ENCODE measurements at regions of chr21 and their contacts with region 1.

Region 1: DNA sequence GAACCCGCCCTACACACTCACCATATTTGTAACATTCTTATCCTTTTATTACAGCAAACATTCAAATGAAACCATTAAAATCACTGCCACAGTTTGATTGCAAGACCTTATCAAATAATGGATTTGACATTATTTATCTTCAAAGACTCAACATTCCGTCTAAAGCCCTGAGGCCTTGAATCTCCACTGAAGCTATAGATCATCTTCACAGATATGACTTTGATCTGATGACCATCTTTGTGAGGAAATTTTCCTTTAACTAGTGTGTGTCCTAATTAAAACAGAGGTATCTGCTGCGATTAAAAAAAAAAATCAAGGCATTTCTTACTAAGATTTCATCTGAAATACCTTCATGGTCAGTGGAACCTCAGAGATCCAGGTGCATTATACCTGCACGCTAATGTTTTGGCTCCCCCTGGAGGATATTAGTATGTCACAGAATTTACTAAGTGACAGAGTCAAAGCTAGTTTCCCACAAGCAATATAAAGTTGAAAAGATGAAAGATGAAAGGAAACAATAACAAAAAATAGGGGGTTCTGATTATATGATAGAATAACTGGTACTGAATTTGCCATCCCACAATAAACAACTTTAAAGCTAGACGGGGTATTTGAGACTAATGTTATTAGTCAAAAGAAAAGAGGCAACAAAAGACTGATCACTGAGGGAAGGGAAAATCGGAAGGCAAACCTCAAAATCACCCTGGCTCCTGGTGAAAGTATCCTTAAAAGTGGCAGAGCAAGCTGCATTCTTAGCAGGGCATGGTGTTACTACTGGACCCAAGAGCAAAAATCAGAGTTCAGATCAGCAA is 923.4 kb downstream of the NCAM2 start:
- DNase-seq: peak in 1 of 2 experiments; percentile 43
- H3K4me3 ChIP-seq: no peak overlapping the region
- H3K4me3 Mint-ChIP-seq: no peak overlapping the region
- H3K27ac Mint-ChIP-seq: no peak overlapping the region
- H3K4me1 ChIP-seq: no peaks in the 10 kb centered on the region
- H3K4me1 Mint-ChIP-seq: peaks cover 7% of the 10 kb centered on the region
- H3K27me3 ChIP-seq: no peaks in the 10 kb centered on the region
- H3K27me3 Mint-ChIP-seq: peaks cover 2% of the 10 kb centered on the region
- CTCF ChIP-seq: peak; percentile 58 to 62

Region 2: DNA sequence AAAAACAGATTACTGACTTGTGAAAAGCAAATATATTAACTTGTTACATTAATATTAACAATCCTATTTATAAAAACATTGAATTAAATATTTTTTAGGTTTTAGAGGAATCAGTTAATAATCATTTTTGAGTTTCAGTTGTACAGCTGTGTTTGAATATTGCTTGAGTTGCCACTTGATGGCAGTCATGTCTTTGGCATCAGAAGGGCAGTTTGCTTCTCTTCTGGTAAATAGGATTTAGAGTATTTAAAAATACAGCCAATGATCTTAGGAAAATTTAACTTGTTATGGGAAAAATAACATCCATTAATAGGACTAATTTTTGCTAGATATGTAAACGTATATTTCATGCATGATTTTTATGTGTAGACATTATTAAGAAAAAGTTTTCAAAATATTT is 689.3 kb before region 1 on chr21:
- CTCF ChIA-PET with region 1: no interaction called
- POLR2A ChIA-PET with region 1: no interaction called
- intact Hi-C with region 1: loop called (anchors 1 kb)
- DNase-seq: peak in 1 of 2 experiments; percentile 3
- H3K4me3 ChIP-seq: no peak overlapping the region
- H3K4me3 Mint-ChIP-seq: no peak overlapping the region
- H3K27ac Mint-ChIP-seq: no peak overlapping the region
- H3K4me1 ChIP-seq: no peaks in the 10 kb centered on the region
- H3K4me1 Mint-ChIP-seq: no peaks in the 10 kb centered on the region
- H3K27me3 ChIP-seq: no peaks in the 10 kb centered on the region
- H3K27me3 Mint-ChIP-seq: no peaks in the 10 kb centered on the region
- CTCF ChIP-seq: peak; percentile 5 to 37

Region 3: GRCh38 chr21:22106720-22107410 is 185.2 kb after region 1 on chr21:
- CTCF ChIA-PET with region 1: no interaction called
- POLR2A ChIA-PET with region 1: no interaction called
- intact Hi-C with region 1: no loop called
- DNase-seq: no peak
- H3K4me3 ChIP-seq: no peak overlapping the region
- H3K4me3 Mint-ChIP-seq: no peak overlapping the region
- H3K27ac Mint-ChIP-seq: no peak overlapping the region
- H3K4me1 ChIP-seq: no peaks in the 10 kb centered on the region
- H3K4me1 Mint-ChIP-seq: no peaks in the 10 kb centered on the region
- H3K27me3 ChIP-seq: no peaks in the 10 kb centered on the region
- H3K27me3 Mint-ChIP-seq: peaks cover 5% of the 10 kb centered on the region
- CTCF ChIP-seq: no peak

Region 4: GRCh38 chr21:22791986-22792560 is 870.4 kb after region 1 on chr21:
- CTCF ChIA-PET with region 1: no interaction called
- POLR2A ChIA-PET with region 1: no interaction called
- intact Hi-C with region 1: loop called (anchors 5 kb)
- DNase-seq: peak in 1 of 2 experiments; percentile 40
- H3K4me3 ChIP-seq: no peak overlapping the region
- H3K4me3 Mint-ChIP-seq: no peak overlapping the region
- H3K27ac Mint-ChIP-seq: no peak overlapping the region
- H3K4me1 ChIP-seq: no peaks in the 10 kb centered on the region
- H3K4me1 Mint-ChIP-seq: no peaks in the 10 kb centered on the region
- H3K27me3 ChIP-seq: no peaks in the 10 kb centered on the region
- H3K27me3 Mint-ChIP-seq: no peaks in the 10 kb centered on the region
- CTCF ChIP-seq: peak; percentile 55 to 59